GM23248 (cell line): ENCODE measurements at regions of chr10 and their contacts with region 1.

Region 1: DNA sequence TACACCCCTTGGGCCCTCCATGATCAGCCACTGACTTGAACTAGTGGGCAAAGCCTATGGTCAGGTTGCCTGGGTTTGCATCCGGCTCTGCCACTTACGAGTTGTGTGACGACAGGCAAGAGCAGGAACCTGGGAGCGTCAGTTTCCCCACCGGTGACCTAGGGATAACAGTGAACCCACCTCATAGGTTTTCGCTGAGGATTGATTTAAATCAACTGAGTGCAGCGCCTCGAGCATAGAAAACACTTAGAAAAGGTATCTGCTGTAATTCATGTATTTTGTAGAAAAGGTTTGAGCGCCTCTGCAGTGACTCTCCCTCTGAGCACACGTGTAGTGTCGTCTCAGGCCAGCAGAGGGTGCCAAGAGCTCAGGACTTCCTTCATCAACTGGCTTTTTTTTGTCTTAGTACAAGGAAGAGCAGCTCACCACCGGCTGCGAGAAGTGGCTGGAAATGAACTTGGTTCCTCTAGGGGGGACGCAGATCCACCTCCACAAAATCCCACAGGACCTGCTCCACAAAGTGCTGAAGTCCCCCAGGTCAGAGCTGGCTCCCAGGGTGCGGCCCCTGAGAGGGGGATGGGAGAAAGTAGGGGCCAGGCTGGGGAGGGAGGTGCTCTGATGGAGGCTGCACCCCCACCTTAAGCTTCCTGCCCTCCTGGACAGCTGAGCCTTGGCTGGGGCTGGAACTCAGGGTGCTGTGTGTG is 27.7 kb downstream of the BTBD16 start:
- DNase-seq: peak; percentile 89
- H3K4me3 ChIP-seq: peak overlapping the region; percentile 44
- H3K27ac ChIP-seq: no peak overlapping the region
- H3K4me1 ChIP-seq: peaks cover 13% of the 10 kb centered on the region
- H3K27me3 ChIP-seq: peaks cover 9% of the 10 kb centered on the region; the same call in 1 of the 2 replicates

Region 2: GRCh38 chr10:121158988-121159579 is 1139.7 kb before region 1 on chr10:
- in situ Hi-C with region 1: no loop called
- DNase-seq: no peak
- H3K4me3 ChIP-seq: no peak overlapping the region
- H3K27ac ChIP-seq: no peak overlapping the region
- H3K4me1 ChIP-seq: no peaks in the 10 kb centered on the region
- H3K27me3 ChIP-seq: no peaks in the 10 kb centered on the region

Region 3: DNA sequence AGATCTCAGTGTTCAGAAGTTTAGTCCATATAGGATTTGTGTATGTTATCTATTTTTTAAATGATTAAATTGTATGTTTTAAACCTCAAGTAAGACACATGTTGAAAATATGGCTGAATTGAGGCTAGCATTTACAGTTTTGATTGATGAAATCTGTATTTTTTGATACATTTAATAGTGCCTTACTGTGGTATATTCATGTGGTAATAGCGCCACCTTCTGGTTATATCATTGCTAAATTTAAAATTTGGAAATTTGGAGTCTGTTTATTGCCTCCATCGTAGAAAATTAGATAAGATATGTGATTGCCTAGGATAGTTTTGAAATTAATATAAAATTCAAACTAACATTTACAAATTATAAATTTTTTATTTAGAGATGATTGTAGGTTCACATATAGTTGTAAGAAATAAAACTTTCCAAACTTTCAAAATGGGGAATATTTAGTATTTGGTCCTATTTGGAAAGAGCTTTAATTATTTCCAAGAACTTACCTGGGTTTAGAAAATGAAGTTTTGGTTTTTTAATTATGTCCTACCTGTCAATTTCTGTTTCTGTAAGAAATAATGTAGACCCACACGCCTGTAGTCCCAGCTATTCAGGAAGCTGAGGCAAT is 136.6 kb after region 1 on chr10:
- in situ Hi-C with region 1: loop called (anchors 10 kb)
- DNase-seq: peak; percentile 72
- H3K4me3 ChIP-seq: no peak overlapping the region
- H3K27ac ChIP-seq: no peak overlapping the region
- H3K4me1 ChIP-seq: no peaks in the 10 kb centered on the region
- H3K27me3 ChIP-seq: no peaks in the 10 kb centered on the region

Region 4: GRCh38 chr10:122565728-122566206 is 267.0 kb after region 1 on chr10:
- in situ Hi-C with region 1: loop called (anchors 10 kb)
- DNase-seq: peak; percentile 84
- H3K4me3 ChIP-seq: peak overlapping the region; percentile 63
- H3K27ac ChIP-seq: no peak overlapping the region
- H3K4me1 ChIP-seq: no peaks in the 10 kb centered on the region
- H3K27me3 ChIP-seq: peaks cover 13% of the 10 kb centered on the region

Region 5: GRCh38 chr10:122980209-122981065 is 681.7 kb after region 1 on chr10 and contains the start of gene PSTK:
- in situ Hi-C with region 1: loop called (anchors 25 kb)
- DNase-seq: peak; percentile 96
- H3K4me3 ChIP-seq: peak within 1 kb of the TSS; percentile 97
- H3K27ac ChIP-seq: peak within 1 kb of the TSS; percentile 89
- H3K4me1 ChIP-seq: 0 out of 2 replicates have a peak, but pooled peaks cover 5% of the 10 kb centered on the region
- H3K27me3 ChIP-seq: no peaks in the 10 kb centered on the region
- total RNA-seq, gene PSTK: 1.4 and 4.9 TPM in 2 replicates